Adrenal gland (tissue), 19 donors: ENCODE measurements at regions of chr2 and their contacts with region 1.

Region 1: GRCh38 chr2:172102391-172103278 is at the start of gene DLX2:
- DNase-seq: peak; percentile 68 to 92 (median 77)
- H3K4me3 ChIP-seq: peak within 1 kb of the TSS in 2 of 4 donors; percentile 27 to 57
- H3K27ac ChIP-seq: peak within 1 kb of the TSS in 1 of 5 donors; percentile 43
- H3K4me1 ChIP-seq: peaks cover 16 to 45% of the 10 kb centered on the region in 2 donors
- H3K27me3 ChIP-seq: peaks cover 93% of the 10 kb centered on the region
- CTCF ChIP-seq: no peak
- POLR2A ChIP-seq: no peak
- total RNA-seq, gene DLX2: 0.06 to 0.49 (median 0.21) TPM in 4 of 9 donors, not detected in the others

Region 2: GRCh38 chr2:171574149-171574795 is 528.4 kb before region 1 on chr2:
- intact Hi-C with region 1: loop called in 1 of 2 experiments (anchors 10 kb)
- DNase-seq: peak; percentile 76 to 92 (median 83)
- H3K4me3 ChIP-seq: no peak overlapping the region
- H3K27ac ChIP-seq: no peak overlapping the region
- H3K4me1 ChIP-seq: no peaks in the 10 kb centered on the region
- H3K27me3 ChIP-seq: no peaks in the 10 kb centered on the region
- CTCF ChIP-seq: peak; percentile 93 to 98 (median 97)
- POLR2A ChIP-seq: no peak

Region 3: DNA sequence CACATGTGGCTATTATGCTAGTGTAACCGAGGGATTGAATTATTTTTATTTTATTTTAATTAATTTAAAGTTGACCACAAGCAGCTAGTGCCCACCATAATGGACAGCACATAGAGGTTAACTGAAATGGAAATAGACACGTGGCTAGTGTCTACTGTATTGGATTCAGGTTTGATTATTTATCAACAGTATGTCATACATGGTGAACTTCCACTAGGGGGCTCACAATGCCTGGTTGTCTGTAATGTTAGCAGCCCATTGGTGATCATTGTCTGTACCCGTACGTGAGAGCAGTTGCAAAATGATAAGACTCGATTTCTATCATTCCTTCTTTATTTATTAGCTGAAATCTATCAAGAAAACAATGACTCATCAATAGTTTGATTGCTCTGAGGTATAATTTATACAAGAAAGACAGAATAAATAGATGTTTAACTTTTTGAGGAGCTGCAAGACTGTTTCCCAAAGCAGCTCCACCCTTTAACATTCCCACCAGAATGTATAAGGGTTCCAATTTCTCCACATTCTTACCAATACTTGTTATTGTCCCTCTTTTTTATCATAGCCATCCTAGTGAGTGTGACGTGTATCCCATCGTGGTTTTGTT is 503.8 kb before region 1 on chr2:
- intact Hi-C with region 1: loop called in 1 of 2 experiments (anchors 10 kb)
- DNase-seq: peak; percentile 41 to 68 (median 61)
- H3K4me3 ChIP-seq: no peak overlapping the region
- H3K27ac ChIP-seq: no peak overlapping the region
- H3K4me1 ChIP-seq: peaks cover 7 to 12% of the 10 kb centered on the region in 2 donors
- H3K27me3 ChIP-seq: no peaks in the 10 kb centered on the region
- CTCF ChIP-seq: peak; percentile 60 to 84 (median 68)
- POLR2A ChIP-seq: no peak

Region 4: DNA sequence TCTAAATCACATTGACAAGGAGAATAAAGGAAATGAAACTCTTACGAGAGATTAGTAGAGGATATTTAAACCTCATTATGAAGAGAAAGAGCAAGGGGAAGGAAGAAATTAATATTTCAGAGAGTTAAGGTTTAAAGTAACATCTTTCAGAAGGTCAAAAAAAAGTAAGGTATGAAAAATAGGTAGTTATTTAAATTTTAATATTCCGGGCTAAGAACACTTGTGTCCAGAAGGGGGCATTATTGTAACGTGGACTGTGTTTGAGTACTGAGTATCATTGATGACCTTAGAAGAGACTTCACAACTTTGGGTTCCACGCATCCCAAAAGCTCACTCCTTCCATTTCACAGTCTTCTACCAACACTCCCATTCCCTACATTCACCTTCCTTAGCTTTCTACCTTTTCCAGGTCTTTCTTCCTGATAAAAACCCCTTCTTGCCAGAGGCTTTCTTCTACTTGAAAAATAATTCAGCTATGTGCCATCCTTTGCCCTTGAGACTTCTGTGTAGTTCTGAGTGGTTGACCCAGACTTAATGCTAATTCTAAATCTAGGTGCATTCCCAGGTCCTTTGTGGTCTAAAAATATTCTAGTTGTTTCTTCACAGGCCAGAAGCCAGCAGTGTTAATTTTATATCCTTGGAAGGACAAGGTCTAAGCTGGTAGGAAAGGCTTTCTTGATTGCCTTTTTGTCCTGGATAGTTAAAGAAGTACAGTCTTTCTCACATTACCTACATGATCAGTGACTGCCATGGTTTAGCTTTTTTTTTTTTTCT is 398.9 kb before region 1 on chr2:
- intact Hi-C with region 1: loop called in 1 of 2 experiments (anchors 10 kb)
- DNase-seq: no peak
- H3K4me3 ChIP-seq: no peak overlapping the region
- H3K27ac ChIP-seq: peak overlapping the region in 1 of 5 donors; percentile 22
- H3K4me1 ChIP-seq: peaks cover 9 to 43% of the 10 kb centered on the region in 2 donors
- H3K27me3 ChIP-seq: no peaks in the 10 kb centered on the region
- CTCF ChIP-seq: peak in 4 of 6 experiments; percentile 6 to 48 (median 35)
- POLR2A ChIP-seq: no peak

Region 5: DNA sequence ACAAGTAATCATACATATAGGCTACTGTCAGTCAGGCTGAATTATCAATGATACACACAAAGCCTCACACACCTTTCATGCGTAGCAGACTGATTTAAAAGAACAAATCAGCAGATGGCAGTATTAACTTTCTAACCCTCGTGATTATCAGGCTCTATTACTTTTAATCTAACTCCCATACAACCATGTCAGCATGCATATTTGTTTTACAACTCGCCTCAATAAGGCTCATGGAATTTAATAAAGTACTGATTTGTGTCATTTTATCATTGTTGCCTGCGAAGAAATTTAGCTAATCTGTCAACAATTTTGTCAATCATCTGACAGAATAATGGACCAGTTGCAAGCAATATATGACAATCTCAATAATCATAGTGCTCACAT is 291.4 kb before region 1 on chr2:
- intact Hi-C with region 1: loop called (anchors 10 kb)
- DNase-seq: no peak
- H3K4me3 ChIP-seq: no peak overlapping the region
- H3K27ac ChIP-seq: no peak overlapping the region
- H3K4me1 ChIP-seq: peaks cover 0 to 9% of the 10 kb centered on the region in 2 donors
- H3K27me3 ChIP-seq: no peaks in the 10 kb centered on the region
- CTCF ChIP-seq: peak; percentile 6 to 56 (median 44)
- POLR2A ChIP-seq: no peak

Region 6: DNA sequence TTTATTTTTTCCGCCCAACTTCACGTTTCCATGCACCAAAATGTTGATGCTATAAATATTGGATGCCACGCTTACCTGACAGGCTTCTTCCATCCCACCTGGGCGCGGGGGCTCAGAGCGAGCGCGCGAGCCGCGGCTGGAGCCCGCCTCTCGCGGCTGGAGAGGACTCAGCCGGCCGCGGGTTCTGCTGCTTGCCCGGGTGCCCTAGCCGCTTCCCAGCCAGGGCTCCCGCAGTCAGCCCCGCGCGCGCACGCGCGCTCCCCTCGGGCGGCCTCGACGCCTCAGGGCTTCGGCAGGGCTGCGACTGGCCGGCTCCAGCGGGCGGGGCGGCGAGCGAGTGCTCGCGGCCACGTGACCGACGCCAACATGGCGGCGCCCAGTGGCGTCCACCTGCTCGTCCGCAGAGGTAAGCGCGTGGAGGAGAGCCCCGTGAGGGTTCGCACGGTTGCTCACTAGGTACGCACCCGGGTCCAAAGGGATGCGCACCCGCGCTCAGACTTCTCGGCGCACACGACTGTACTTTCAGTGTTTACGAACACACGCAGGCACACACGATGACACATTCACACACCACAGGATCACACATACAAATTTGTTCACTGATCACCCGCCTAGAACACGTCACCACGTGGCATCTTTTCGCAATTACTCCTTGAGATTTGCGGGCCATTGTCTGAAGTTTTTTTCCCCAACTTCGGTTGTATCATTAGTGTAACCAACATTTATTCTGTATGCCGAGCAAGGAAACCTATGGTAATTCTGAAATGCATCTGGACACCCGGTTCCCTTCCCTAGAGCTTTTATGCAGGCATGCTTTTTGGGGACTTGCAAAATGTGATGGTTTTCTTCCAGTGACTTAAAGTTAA is 102.8 kb before region 1 on chr2 and contains the start of gene METAP1D:
- intact Hi-C with region 1: loop called (anchors 5 kb)
- DNase-seq: peak; percentile 89 to 94 (median 93)
- H3K4me3 ChIP-seq: peak within 1 kb of the TSS; percentile 10 to 87 (median 44)
- H3K27ac ChIP-seq: peak within 1 kb of the TSS in 3 of 5 donors; percentile 2 to 77 (median 50)
- H3K4me1 ChIP-seq: peaks cover 0 to 16% of the 10 kb centered on the region in 2 donors
- H3K27me3 ChIP-seq: no peaks in the 10 kb centered on the region
- CTCF ChIP-seq: no peak
- POLR2A ChIP-seq: peak; percentile 53 to 70
- total RNA-seq, gene METAP1D: 1.7 to 21.8 (median 7.4) TPM

Region 7: DNA sequence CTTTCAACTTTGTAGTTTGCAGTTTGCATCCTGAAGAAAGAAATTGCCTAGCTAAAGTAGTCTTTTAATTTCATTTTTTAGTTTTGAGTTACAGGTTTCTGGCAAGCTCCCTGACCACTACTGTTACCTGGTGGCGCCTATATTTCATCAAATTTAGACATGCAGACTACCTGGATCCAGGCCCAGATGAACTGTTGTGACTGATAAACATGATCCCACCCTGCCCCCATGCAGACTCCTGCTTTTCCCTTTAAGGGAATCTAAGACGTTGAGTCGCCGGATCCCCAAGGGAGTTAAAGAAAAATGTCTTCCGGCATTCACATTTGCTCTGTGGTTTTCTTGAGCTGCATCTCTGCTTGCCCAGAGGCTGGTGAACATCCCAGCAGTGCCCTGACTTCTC is 80.7 kb before region 1 on chr2:
- intact Hi-C with region 1: no loop called
- DNase-seq: no peak
- H3K4me3 ChIP-seq: no peak overlapping the region
- H3K27ac ChIP-seq: no peak overlapping the region
- H3K4me1 ChIP-seq: peaks cover 0 to 9% of the 10 kb centered on the region in 2 donors
- H3K27me3 ChIP-seq: no peaks in the 10 kb centered on the region
- CTCF ChIP-seq: no peak
- POLR2A ChIP-seq: no peak

Region 8: GRCh38 chr2:172555522-172556283 is 453.1 kb after region 1 on chr2 and contains the start of gene PDK1:
- intact Hi-C with region 1: no loop called
- DNase-seq: peak; percentile 94 to 97 (median 95)
- H3K4me3 ChIP-seq: peak within 1 kb of the TSS; percentile 46 to 92 (median 69)
- H3K27ac ChIP-seq: peak within 1 kb of the TSS; percentile 79 to 99 (median 91)
- H3K4me1 ChIP-seq: peaks cover 11 to 16% of the 10 kb centered on the region in 2 donors
- H3K27me3 ChIP-seq: no peaks in the 10 kb centered on the region
- CTCF ChIP-seq: peak in 1 of 6 experiments; percentile 21
- POLR2A ChIP-seq: peak; percentile 39 to 89
- total RNA-seq, gene PDK1: 9.9 to 112 (median 20.4) TPM